ENCODE measurements at regions of chr10 and their contacts with region 1.

Region 1: GRCh38 chr10:32155042-32155531 is 98.9 kb upstream of the KIF5B start:
- DNase-seq: peak; percentile 76
- H3K4me3 ChIP-seq: no peak overlapping the region
- H3K27ac ChIP-seq: peak overlapping the region; percentile 85
- H3K4me1 ChIP-seq: peaks cover 20% of the 10 kb centered on the region
- H3K27me3 ChIP-seq: no peaks in the 10 kb centered on the region
- CTCF ChIP-seq: peak; percentile 5 to 14

Region 2: DNA sequence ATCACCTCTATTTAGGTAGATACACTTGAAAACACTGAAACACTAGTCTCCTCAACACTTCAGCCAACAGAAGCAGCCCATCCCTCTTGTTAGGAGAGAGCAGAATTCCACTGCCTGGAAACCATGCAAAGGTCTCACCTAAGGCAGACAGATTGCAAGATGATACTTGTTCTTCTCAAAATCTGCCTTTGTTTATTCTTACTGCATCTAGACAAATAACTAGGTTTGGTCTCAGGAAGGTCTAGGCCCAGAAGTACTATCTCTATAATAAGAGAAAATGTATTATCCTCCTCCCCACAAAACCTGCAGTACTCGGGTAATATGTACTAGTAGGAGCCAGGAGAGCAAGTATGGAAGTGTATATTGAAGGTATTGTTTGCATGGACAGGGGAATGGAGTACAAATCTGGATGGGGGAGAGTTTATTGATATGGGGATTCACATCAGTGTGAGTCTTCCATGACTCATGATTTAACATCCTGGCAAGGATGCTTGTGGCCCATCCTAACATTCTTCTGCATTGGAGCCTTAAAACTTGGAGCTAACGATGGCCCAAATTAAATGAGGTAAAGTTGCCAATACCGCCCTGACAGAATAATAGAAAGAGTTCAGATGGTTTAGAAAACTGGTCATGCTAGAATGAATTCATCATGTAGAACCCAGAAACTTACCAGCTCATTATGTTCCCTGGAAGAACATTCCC is 82.7 kb after region 1 on chr10:
- CTCF ChIA-PET with region 1: interaction called, 12 read pairs
- dilution Hi-C with region 1: no loop called
- in situ Hi-C with region 1: no loop called
- intact Hi-C with region 1: no loop called
- DNase-seq: peak; percentile 85
- H3K4me3 ChIP-seq: no peak overlapping the region
- H3K27ac ChIP-seq: peak overlapping the region; percentile 60
- H3K4me1 ChIP-seq: peaks cover 42% of the 10 kb centered on the region
- H3K27me3 ChIP-seq: no peaks in the 10 kb centered on the region
- CTCF ChIP-seq: no peak

Measured in mammary epithelial cell (primary cell).